Activated CD4-positive, alpha-beta memory T cell treated with anti-CD3 and anti-CD28 coated beads for 36 hours (primary cell): ENCODE measurements at regions of chr12 and their contacts with region 1.

Region 1: DNA sequence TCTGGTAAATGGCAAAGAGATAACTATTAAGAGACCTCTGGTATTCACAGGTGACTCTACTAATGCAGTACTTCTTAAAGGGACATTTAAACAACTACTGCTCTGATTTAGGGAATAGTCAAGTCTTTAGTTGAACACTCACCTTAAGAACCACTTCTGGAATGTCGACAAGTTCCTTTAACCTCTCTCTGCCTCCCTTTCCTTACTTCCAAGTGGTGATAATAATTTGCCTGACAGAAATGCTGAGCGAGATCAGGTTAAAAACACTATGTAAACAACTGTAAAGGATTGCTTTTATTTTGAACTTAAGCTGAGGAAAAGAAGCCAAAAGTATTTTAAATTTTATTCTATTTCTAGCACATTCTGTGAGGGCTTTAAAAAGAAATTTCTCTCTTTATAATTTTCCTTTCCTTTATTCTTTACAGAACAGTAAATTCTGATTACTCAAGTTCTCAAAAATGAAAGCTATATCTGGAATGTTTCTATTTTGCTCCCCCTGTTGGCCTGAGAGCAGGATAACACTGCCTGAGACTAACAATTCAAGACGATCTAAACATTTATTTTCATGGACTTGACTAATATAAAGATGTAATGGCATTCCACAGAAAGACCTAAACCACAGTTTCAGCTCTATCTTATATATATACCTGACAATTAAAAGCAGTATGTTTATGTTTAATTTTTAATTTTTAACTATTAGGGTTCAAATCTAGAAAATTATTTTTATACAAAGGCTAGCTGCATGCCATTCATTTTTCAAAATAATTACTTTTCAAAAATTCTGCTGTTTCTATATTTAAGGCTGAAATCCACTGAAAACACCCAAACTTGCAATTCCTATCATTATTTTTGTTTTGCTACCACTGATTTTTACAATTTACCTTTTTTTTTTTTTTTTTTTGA is 29.2 kb downstream of the ZCCHC8 start:
- DNase-seq: peak; percentile 9
- H3K4me3 Mint-ChIP-seq: no peak overlapping the region
- H3K27ac Mint-ChIP-seq: no peak overlapping the region
- H3K4me1 Mint-ChIP-seq: peaks cover 24% of the 10 kb centered on the region
- H3K27me3 Mint-ChIP-seq: no peaks in the 10 kb centered on the region

Region 2: GRCh38 chr12:122215771-122216170 is 255.8 kb before region 1 on chr12:
- CTCF ChIA-PET with region 1: no interaction called
- POLR2A ChIA-PET with region 1: no interaction called
- intact Hi-C with region 1: no loop called
- DNase-seq: no peak
- H3K4me3 Mint-ChIP-seq: no peak overlapping the region
- H3K27ac Mint-ChIP-seq: peak overlapping the region; percentile 35
- H3K4me1 Mint-ChIP-seq: peaks cover 9% of the 10 kb centered on the region
- H3K27me3 Mint-ChIP-seq: no peaks in the 10 kb centered on the region

Region 3: GRCh38 chr12:122336015-122336946 is 135.3 kb before region 1 on chr12:
- CTCF ChIA-PET with region 1: interaction called, 11 read pairs
- POLR2A ChIA-PET with region 1: no interaction called
- intact Hi-C with region 1: loop called (anchors 1 kb)
- DNase-seq: peak; percentile 60
- H3K4me3 Mint-ChIP-seq: no peak overlapping the region
- H3K27ac Mint-ChIP-seq: peak overlapping the region; percentile 40
- H3K4me1 Mint-ChIP-seq: peaks cover 12% of the 10 kb centered on the region
- H3K27me3 Mint-ChIP-seq: no peaks in the 10 kb centered on the region

Region 4: GRCh38 chr12:122406701-122407164 is 64.8 kb before region 1 on chr12:
- CTCF ChIA-PET with region 1: interaction called, 208 read pairs
- POLR2A ChIA-PET with region 1: interaction called, 3 read pairs
- intact Hi-C with region 1: no loop called
- DNase-seq: no peak
- H3K4me3 Mint-ChIP-seq: no peak overlapping the region
- H3K27ac Mint-ChIP-seq: peak overlapping the region; percentile 25
- H3K4me1 Mint-ChIP-seq: peaks cover 44% of the 10 kb centered on the region
- H3K27me3 Mint-ChIP-seq: no peaks in the 10 kb centered on the region

Region 5: GRCh38 chr12:122413516-122414404 is 57.8 kb before region 1 on chr12:
- CTCF ChIA-PET with region 1: interaction called, 13 read pairs
- POLR2A ChIA-PET with region 1: no interaction called
- intact Hi-C with region 1: no loop called
- DNase-seq: no peak
- H3K4me3 Mint-ChIP-seq: peak overlapping the region; percentile 71
- H3K27ac Mint-ChIP-seq: peak overlapping the region; percentile 96
- H3K4me1 Mint-ChIP-seq: peaks cover 56% of the 10 kb centered on the region
- H3K27me3 Mint-ChIP-seq: no peaks in the 10 kb centered on the region

Region 6: DNA sequence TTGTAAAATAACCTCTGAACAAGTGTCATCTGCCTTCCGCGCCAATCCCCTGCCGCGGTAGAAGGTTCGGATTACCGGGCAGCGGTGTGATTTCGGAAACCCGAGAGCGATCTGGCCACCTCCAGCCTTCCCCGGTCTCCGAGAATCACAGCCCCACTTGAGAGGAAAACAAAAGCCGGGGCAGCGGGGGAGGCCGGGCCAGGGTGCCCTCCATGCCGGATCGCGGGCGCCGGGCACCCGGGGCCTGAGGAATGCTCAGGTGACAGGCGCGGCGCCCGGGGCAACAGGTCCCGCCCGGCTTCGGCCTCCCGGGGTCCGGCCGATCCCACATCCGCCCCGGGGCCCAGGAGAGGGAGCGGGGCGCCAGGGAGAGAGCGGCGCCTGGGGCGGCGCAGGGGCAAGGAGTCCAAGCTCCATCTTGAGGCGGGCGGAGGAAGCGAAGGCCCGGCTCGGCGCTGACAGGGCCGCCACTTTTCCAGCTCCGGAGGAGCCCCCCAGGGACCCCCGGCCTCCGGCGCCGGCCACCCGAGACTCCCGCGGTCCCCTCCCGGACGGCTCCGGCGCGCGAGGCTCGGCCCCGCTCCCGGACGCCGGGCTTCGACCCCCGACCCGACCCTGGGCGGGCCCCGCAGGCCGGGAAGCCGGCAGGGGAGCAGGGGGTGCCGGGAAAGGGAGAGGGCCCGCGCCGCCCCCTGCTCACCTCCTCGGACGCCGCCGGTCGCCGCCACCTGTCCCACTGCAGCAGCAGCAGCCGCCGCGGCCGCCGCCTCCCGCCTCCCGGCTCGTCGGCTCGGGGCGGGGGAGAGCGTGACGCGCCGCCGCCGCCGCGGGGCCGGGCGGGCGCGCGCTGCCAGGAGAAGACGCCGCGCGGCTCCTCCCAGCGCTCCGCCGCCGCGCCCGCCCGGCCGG is 49.5 kb before region 1 on chr12 and contains the start of gene CLIP1:
- CTCF ChIA-PET with region 1: interaction called, 13 read pairs
- POLR2A ChIA-PET with region 1: no interaction called
- intact Hi-C with region 1: loop called (anchors 2 kb)
- DNase-seq: peak; percentile 68
- H3K4me3 Mint-ChIP-seq: peak within 1 kb of the TSS; percentile 93
- H3K27ac Mint-ChIP-seq: peak within 1 kb of the TSS; percentile 92
- H3K4me1 Mint-ChIP-seq: peaks cover 48% of the 10 kb centered on the region
- H3K27me3 Mint-ChIP-seq: no peaks in the 10 kb centered on the region
- total RNA-seq, gene CLIP1: 69.2 to 71.8 TPM

Region 7: GRCh38 chr12:122452701-122453285 is 18.8 kb before region 1 on chr12:
- CTCF ChIA-PET with region 1: interaction called, 13 read pairs
- POLR2A ChIA-PET with region 1: interaction called, 4 read pairs
- intact Hi-C with region 1: loop called (anchors 1 kb)
- DNase-seq: peak; percentile 23
- H3K4me3 Mint-ChIP-seq: peak overlapping the region; percentile 70
- H3K27ac Mint-ChIP-seq: peak overlapping the region; percentile 92
- H3K4me1 Mint-ChIP-seq: peaks cover 29% of the 10 kb centered on the region
- H3K27me3 Mint-ChIP-seq: no peaks in the 10 kb centered on the region

Region 8: DNA sequence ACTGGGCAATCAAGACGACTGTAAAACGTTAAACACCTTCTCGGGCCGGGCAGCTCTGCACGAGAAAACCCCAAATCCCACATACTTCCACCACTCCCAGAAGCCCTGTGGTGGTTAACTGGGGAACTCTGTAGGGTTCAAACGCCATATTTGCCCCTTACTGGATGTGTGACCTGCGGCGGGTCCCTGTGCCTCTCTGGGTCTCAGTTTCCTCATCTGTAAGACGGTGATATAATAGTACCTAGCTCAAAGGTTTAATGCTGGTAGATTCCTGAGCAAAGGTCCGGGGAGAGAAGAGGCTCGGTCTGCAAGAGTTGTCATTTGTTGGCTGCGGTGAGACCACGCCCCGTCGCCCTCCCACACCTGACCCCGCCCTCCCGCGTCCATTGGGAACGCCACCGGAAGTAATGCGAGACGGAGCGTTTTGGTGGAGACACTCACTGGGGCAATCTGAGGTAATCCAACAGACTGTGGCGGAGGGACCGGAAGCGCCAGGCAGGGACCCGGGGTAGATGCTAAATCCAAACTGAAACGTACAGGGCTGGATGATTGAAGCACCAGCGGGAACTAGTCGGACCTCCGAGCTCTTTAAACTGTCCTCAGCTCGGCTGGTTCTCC is 502.8 kb after region 1 on chr12:
- CTCF ChIA-PET with region 1: no interaction called
- POLR2A ChIA-PET with region 1: no interaction called
- intact Hi-C with region 1: no loop called
- DNase-seq: peak; percentile 100
- H3K4me3 Mint-ChIP-seq: peak overlapping the region; percentile 98
- H3K27ac Mint-ChIP-seq: peak overlapping the region; percentile 99
- H3K4me1 Mint-ChIP-seq: peaks cover 25% of the 10 kb centered on the region
- H3K27me3 Mint-ChIP-seq: no peaks in the 10 kb centered on the region

Region 9: GRCh38 chr12:122984612-122985337 is 513.2 kb after region 1 on chr12:
- CTCF ChIA-PET with region 1: no interaction called
- POLR2A ChIA-PET with region 1: no interaction called
- intact Hi-C with region 1: no loop called
- DNase-seq: no peak
- H3K4me3 Mint-ChIP-seq: no peak overlapping the region
- H3K27ac Mint-ChIP-seq: peak overlapping the region; percentile 10
- H3K4me1 Mint-ChIP-seq: peaks cover 21% of the 10 kb centered on the region
- H3K27me3 Mint-ChIP-seq: no peaks in the 10 kb centered on the region